ENCODE measurements at regions of chr12 and their contacts with region 1.

Region 1: GRCh38 chr12:101830367-101831325 is at the start of gene GNPTAB:
- DNase-seq: peak; percentile 94 to 97 (median 94)
- H3K4me3 ChIP-seq: peak within 1 kb of the TSS; percentile 82
- H3K4me3 Mint-ChIP-seq: peak within 1 kb of the TSS; percentile 92 to 100 (median 98)
- H3K27ac ChIP-seq: peak within 1 kb of the TSS; percentile 74
- H3K27ac Mint-ChIP-seq: peak within 1 kb of the TSS; percentile 83 to 98 (median 96)
- H3K4me1 ChIP-seq: peaks cover 46% of the 10 kb centered on the region
- H3K4me1 Mint-ChIP-seq: peaks cover 42 to 54% (median 48%) of the 10 kb centered on the region in 3 donors
- H3K27me3 ChIP-seq: no peaks in the 10 kb centered on the region
- H3K27me3 Mint-ChIP-seq: no peaks in the 10 kb centered on the region
- total RNA-seq, gene GNPTAB: 62.1 to 64.7 TPM

Region 2: DNA sequence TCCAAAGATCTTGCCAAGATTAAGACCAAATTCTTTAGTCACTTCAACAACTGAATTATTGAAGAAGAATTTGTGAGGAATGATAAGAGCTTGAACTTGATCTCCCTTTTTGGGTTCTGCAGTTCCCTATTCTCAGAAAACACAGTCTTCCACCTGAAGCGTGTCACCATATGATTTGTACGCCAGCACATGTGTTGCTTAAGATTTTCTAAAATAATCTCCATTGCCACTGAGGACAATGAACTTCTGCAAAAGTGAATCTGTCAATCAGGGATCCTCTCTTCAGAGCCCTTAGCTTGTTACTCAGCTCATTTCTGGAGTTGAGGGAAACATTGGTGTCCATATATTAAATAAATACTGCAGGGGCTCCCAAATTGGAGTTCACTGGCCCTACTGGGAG is 359.7 kb before region 1 on chr12:
- CTCF ChIA-PET with region 1: no interaction called
- POLR2A ChIA-PET with region 1: interaction called, 10 read pairs
- DNase-seq: no peak
- H3K4me3 ChIP-seq: no peak overlapping the region
- H3K4me3 Mint-ChIP-seq: no peak overlapping the region
- H3K27ac ChIP-seq: no peak overlapping the region
- H3K27ac Mint-ChIP-seq: no peak overlapping the region
- H3K4me1 ChIP-seq: no peaks in the 10 kb centered on the region
- H3K4me1 Mint-ChIP-seq: no peaks in the 10 kb centered on the region
- H3K27me3 ChIP-seq: no peaks in the 10 kb centered on the region
- H3K27me3 Mint-ChIP-seq: peaks cover under 1 to 4% of the 10 kb centered on the region in 2 donors

Region 3: GRCh38 chr12:101501410-101501995 is 329.1 kb before region 1 on chr12:
- CTCF ChIA-PET with region 1: no interaction called
- POLR2A ChIA-PET with region 1: no interaction called
- DNase-seq: no peak
- H3K4me3 ChIP-seq: no peak overlapping the region
- H3K4me3 Mint-ChIP-seq: no peak overlapping the region
- H3K27ac ChIP-seq: no peak overlapping the region
- H3K27ac Mint-ChIP-seq: no peak overlapping the region
- H3K4me1 ChIP-seq: no peaks in the 10 kb centered on the region
- H3K4me1 Mint-ChIP-seq: no peaks in the 10 kb centered on the region
- H3K27me3 ChIP-seq: peaks cover 7% of the 10 kb centered on the region
- H3K27me3 Mint-ChIP-seq: peaks cover 6 to 32% of the 10 kb centered on the region in 2 donors

Region 4: GRCh38 chr12:101738920-101739665 is 91.6 kb before region 1 on chr12 and contains the start of gene SYCP3:
- CTCF ChIA-PET with region 1: no interaction called
- POLR2A ChIA-PET with region 1: no interaction called
- DNase-seq: no peak
- H3K4me3 ChIP-seq: no peak within 1 kb of the TSS
- H3K4me3 Mint-ChIP-seq: no peak within 1 kb of the TSS
- H3K27ac ChIP-seq: no peak within 1 kb of the TSS
- H3K27ac Mint-ChIP-seq: no peak within 1 kb of the TSS
- H3K4me1 ChIP-seq: no peaks in the 10 kb centered on the region
- H3K4me1 Mint-ChIP-seq: peaks cover 15 to 16% (median 15%) of the 10 kb centered on the region in 3 donors
- H3K27me3 ChIP-seq: no peaks in the 10 kb centered on the region
- H3K27me3 Mint-ChIP-seq: no peaks in the 10 kb centered on the region
- total RNA-seq, gene SYCP3: 0.22 to 0.27 TPM

Region 5: DNA sequence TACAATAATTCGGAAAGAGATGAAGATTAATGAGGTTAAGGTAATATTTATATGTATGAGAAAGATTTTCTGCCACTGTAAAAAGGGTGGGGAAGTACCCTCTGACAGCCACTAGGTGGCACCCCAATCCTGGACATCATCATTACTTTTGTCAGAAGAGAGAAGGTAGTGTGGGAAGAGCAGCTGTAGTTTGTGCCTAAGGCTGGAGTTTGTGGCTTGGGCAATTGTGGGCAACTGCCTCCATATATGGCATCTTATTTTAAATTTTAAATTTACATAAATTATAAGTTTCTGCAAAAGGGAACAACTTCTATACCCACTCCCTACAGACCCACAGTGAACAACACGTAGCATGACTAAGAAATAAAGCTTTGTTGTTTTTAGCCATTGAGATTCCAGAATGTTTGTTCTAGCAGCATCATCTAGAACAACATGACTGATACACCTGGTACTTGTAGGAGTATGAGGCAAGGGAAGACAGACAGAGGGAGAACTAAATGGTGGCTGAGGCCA is 56.9 kb before region 1 on chr12:
- CTCF ChIA-PET with region 1: interaction called, 119 read pairs
- POLR2A ChIA-PET with region 1: interaction called, 8 read pairs
- DNase-seq: peak; percentile 43 to 75 (median 62)
- H3K4me3 ChIP-seq: no peak overlapping the region
- H3K4me3 Mint-ChIP-seq: no peak overlapping the region
- H3K27ac ChIP-seq: no peak overlapping the region
- H3K27ac Mint-ChIP-seq: peak overlapping the region in 1 of 8 donors; percentile 43
- H3K4me1 ChIP-seq: no peaks in the 10 kb centered on the region
- H3K4me1 Mint-ChIP-seq: peaks cover 0 to 7% (median 1%) of the 10 kb centered on the region in 3 donors
- H3K27me3 ChIP-seq: no peaks in the 10 kb centered on the region
- H3K27me3 Mint-ChIP-seq: no peaks in the 10 kb centered on the region

Region 6: DNA sequence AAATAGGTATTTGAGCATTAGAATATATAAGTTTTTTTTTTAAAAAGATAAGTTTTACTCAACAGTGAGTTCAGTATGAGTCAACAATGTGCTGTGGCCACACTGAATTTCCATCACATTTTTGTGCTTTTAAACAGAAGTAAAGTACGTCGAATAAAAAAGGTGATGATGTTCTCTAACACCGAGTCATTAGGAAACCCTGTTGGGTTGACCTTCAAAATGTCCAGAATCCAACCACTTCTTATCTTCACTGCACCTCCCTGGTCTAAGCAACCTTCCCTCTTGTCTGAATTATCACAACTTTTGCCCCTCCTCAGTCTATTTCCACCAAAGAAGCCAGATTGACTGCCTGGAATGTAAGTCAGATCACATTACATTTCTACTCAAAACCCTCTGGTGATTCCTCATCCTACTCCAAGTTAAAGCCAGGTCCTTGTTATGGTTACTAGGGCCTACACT is 48.3 kb before region 1 on chr12:
- CTCF ChIA-PET with region 1: interaction called, 17 read pairs
- POLR2A ChIA-PET with region 1: interaction called, 8 read pairs
- DNase-seq: no peak
- H3K4me3 ChIP-seq: no peak overlapping the region
- H3K4me3 Mint-ChIP-seq: no peak overlapping the region
- H3K27ac ChIP-seq: no peak overlapping the region
- H3K27ac Mint-ChIP-seq: peak overlapping the region in 5 of 8 donors; percentile 2 to 63 (median 45)
- H3K4me1 ChIP-seq: no peaks in the 10 kb centered on the region
- H3K4me1 Mint-ChIP-seq: peaks cover 5 to 12% (median 6%) of the 10 kb centered on the region in 3 donors
- H3K27me3 ChIP-seq: no peaks in the 10 kb centered on the region
- H3K27me3 Mint-ChIP-seq: no peaks in the 10 kb centered on the region

Region 7: GRCh38 chr12:101792051-101792931 is 38.4 kb before region 1 on chr12:
- CTCF ChIA-PET with region 1: interaction called, 36 read pairs
- POLR2A ChIA-PET with region 1: no interaction called
- DNase-seq: no peak
- H3K4me3 ChIP-seq: no peak overlapping the region
- H3K4me3 Mint-ChIP-seq: peak overlapping the region in 2 of 7 donors; percentile 12 to 45
- H3K27ac ChIP-seq: no peak overlapping the region
- H3K27ac Mint-ChIP-seq: peak overlapping the region in 7 of 8 donors; percentile 10 to 84 (median 62)
- H3K4me1 ChIP-seq: peaks cover 7% of the 10 kb centered on the region
- H3K4me1 Mint-ChIP-seq: peaks cover 25 to 39% (median 32%) of the 10 kb centered on the region in 3 donors
- H3K27me3 ChIP-seq: no peaks in the 10 kb centered on the region
- H3K27me3 Mint-ChIP-seq: no peaks in the 10 kb centered on the region